ENCODE measurements at regions of chr14 and their contacts with region 1.

Region 1: GRCh38 chr14:72420725-72421474 is 473.0 kb downstream of the DPF3 start:
- DNase-seq: peak; percentile 65
- CTCF ChIP-seq: peak; percentile 92

Region 2: DNA sequence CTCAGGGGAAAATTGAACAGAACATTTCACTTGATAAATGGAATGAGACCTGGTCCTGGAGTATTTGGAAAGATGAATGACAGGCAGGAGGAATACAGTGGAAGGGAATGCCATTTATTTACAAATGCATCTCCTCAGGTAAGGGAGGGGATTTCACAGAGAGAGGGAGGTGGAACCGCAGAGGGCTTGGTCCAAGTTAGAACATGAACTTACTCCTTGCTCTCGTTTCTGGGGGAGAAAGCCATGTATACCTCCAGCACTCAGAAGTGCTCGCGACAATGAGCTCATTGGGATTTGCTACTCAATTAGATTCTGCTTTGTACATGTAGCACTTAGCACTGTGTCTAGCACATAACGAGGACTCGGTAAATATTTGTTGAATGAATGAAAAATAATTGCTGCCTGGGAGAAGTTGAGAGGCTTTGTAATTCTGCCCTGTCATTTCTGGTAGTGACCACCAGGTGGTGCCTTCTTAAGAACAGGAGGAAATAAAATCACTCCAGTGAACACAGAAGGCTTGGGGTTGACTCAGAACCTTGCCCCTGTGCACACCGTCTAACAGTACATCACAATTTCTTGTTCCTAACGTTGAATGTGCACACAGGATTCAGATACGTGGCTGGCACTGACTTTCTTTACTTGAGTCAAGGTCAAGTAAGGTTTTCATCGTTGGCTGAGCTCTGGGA is 397.0 kb before region 1 on chr14:
- CTCF ChIA-PET with region 1: interaction called, 39 read pairs
- POLR2A ChIA-PET with region 1: no interaction called
- DNase-seq: peak; percentile 30
- CTCF ChIP-seq: peak; percentile 59

Region 3: GRCh38 chr14:72433521-72433920 is 12.6 kb after region 1 on chr14:
- CTCF ChIA-PET with region 1: interaction called, 83 read pairs
- POLR2A ChIA-PET with region 1: no interaction called
- DNase-seq: no peak
- CTCF ChIP-seq: no peak

Region 4: GRCh38 chr14:72745991-72746980 is 325.4 kb after region 1 on chr14:
- CTCF ChIA-PET with region 1: no interaction called
- POLR2A ChIA-PET with region 1: no interaction called
- DNase-seq: no peak
- CTCF ChIP-seq: no peak

Measured in GM10248 (cell line).